ENCODE measurements at regions of chr6 and their contacts with region 1.

Region 1: DNA sequence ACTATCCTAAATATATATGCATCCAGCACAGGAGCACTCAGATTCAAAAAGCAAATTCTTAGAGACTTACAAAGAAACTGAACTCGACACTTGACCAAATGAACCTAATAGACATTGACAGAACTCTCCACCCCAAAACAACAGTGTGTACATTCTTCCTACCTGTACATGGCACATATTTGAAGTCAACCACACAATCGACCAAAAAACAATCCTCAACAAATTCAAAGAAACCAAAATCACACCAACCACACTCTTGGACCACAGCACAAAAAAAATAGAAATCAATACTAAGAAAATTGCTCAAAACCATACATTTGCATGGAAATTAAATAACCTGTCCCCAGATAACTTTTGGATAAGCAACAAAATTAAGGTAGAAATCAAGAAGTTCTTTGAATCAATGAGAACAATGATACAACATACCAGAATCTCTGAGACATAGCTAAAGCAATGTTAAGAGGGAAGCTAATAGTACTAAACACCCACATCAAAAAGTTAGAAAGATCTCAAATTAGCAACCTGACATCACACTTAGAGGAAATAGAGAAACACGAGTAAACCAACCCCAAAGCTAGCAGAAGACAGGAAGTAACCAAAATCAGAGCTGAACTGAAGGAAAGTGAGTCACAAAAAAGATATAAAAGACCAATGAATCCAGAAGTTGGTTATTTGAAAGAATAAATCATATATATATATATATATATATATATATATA is 12.5 kb upstream of the TREM1 start:
- DNase-seq: no peak
- CTCF ChIP-seq: no peak

Region 2: DNA sequence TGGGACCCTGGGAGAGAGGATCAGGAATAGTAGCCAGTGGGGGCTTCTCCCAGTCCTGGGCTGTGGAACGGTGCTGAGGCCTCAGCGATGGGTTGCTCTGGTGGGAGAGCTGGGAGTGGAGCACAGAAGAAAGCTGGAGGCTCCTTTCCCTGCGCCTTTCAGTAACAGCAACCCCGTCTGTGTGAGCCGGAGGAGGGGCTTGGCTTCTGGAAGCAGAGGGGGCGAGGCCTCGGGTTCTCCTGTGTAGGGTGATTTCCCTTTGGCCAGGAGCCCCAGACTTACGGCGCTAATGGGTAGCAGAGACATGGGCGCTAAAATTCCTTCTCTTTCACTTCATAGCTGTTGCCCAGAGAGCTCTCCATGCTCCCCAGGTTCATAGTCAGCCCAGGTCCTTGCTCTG is 1451.7 kb before region 1 on chr6:
- CTCF ChIA-PET with region 1: no interaction called
- POLR2A ChIA-PET with region 1: no interaction called
- DNase-seq: no peak
- CTCF ChIP-seq: no peak

Region 3: DNA sequence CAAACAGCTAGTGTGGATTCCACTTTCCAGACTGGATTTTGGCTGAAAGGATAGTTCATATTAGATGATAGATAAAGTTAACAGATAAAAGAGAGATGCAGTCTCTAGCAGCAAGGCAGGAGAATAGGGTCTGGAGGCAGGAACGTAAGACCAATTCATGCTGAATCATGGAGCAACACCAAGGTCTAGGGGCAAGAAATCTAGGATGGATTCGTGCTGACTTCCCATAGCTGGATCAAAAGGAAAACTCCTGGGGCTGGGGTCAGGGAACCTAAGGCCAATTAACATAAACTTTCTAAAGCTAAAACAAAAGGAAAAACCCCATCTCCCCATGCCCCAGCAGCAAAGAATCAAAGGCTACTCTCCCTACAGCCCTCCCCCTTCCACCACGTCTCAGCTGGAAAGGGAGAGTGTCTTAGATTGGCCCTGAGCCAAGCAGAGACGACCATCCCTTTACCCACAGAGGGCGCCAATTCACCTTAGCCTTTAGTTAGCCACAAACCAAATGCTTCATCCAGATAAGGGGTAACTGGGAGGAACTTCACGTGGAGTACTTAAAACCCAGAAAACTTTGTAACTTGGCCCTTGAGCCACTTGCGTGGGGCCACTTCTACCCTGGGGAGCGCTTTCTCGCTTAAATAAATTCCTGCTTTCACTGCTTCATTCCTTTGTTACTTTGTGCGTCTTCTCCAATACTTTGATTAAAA is 20.1 kb before region 1 on chr6:
- CTCF ChIA-PET with region 1: interaction called, 11 read pairs
- POLR2A ChIA-PET with region 1: no interaction called
- DNase-seq: peak; percentile 55
- CTCF ChIP-seq: peak; percentile 54